CD8-positive, alpha-beta memory T cell (primary cell): ENCODE measurements at regions of chr3 and their contacts with region 1.

Region 1: GRCh38 chr3:195729476-195730251 is 8.9 kb downstream of the MUC20 start:
- DNase-seq: no peak
- H3K4me3 ChIP-seq: no peak overlapping the region
- H3K4me3 Mint-ChIP-seq: no peak overlapping the region
- H3K27ac ChIP-seq: no peak overlapping the region
- H3K27ac Mint-ChIP-seq: no peak overlapping the region
- H3K4me1 ChIP-seq: no peaks in the 10 kb centered on the region
- H3K4me1 Mint-ChIP-seq: no peaks in the 10 kb centered on the region
- H3K27me3 ChIP-seq: no peaks in the 10 kb centered on the region
- H3K27me3 Mint-ChIP-seq: peaks cover 3 to 8% of the 10 kb centered on the region in 2 donors

Region 2: GRCh38 chr3:195744437-195744836 is 14.8 kb after region 1 on chr3:
- CTCF ChIA-PET with region 1: no interaction called
- POLR2A ChIA-PET with region 1: interaction called, 11 read pairs
- DNase-seq: no peak
- H3K4me3 ChIP-seq: no peak overlapping the region
- H3K4me3 Mint-ChIP-seq: no peak overlapping the region
- H3K27ac ChIP-seq: no peak overlapping the region
- H3K27ac Mint-ChIP-seq: peak overlapping the region in 1 of 8 donors; percentile 17
- H3K4me1 ChIP-seq: peaks cover 6% of the 10 kb centered on the region
- H3K4me1 Mint-ChIP-seq: peaks cover 10 to 14% (median 14%) of the 10 kb centered on the region in 3 donors
- H3K27me3 ChIP-seq: peaks cover 4% of the 10 kb centered on the region
- H3K27me3 Mint-ChIP-seq: peaks cover 14 to 26% of the 10 kb centered on the region in 2 donors

Region 3: GRCh38 chr3:195876297-195877031 is 146.8 kb after region 1 on chr3:
- CTCF ChIA-PET with region 1: no interaction called
- POLR2A ChIA-PET with region 1: no interaction called
- DNase-seq: peak in 1 of 5 donors; percentile 13
- H3K4me3 ChIP-seq: no peak overlapping the region
- H3K4me3 Mint-ChIP-seq: peak overlapping the region in 1 of 7 donors; percentile 56
- H3K27ac ChIP-seq: no peak overlapping the region
- H3K27ac Mint-ChIP-seq: peak overlapping the region in 5 of 8 donors; percentile 12 to 80 (median 73)
- H3K4me1 ChIP-seq: no peaks in the 10 kb centered on the region
- H3K4me1 Mint-ChIP-seq: no peaks in the 10 kb centered on the region
- H3K27me3 ChIP-seq: no peaks in the 10 kb centered on the region
- H3K27me3 Mint-ChIP-seq: no peaks in the 10 kb centered on the region